K562 (cell line): ENCODE measurements at regions of chr3 and their contacts with region 1.

Region 1: GRCh38 chr3:160399125-160400029 is at the starts of genes IFT80 and SMC4:
- DNase-seq: peak; percentile 92 to 97 (median 94)
- ATAC-seq: peak; percentile 81
- H3K4me3 ChIP-seq: peak within 1 kb of the TSS; percentile 71
- H3K27ac ChIP-seq: peak within 1 kb of the TSS; percentile 99
- H3K4me1 ChIP-seq: peaks cover 8 to 14% of the 10 kb centered on the region in 2 experiments
- H3K27me3 ChIP-seq: no peaks in the 10 kb centered on the region
- CTCF ChIP-seq: no peak; a peak in 1 of 6 replicates
- EP300 ChIP-seq: peak; percentile 66
- POLR2A ChIP-seq: peak; percentile 95
- RAD21 ChIP-seq: no peak
- polyA plus RNA-seq, gene IFT80: 6.7 to 7.2 TPM
- polyA plus RNA-seq, gene SMC4: 87.9 to 105 TPM

Region 2: DNA sequence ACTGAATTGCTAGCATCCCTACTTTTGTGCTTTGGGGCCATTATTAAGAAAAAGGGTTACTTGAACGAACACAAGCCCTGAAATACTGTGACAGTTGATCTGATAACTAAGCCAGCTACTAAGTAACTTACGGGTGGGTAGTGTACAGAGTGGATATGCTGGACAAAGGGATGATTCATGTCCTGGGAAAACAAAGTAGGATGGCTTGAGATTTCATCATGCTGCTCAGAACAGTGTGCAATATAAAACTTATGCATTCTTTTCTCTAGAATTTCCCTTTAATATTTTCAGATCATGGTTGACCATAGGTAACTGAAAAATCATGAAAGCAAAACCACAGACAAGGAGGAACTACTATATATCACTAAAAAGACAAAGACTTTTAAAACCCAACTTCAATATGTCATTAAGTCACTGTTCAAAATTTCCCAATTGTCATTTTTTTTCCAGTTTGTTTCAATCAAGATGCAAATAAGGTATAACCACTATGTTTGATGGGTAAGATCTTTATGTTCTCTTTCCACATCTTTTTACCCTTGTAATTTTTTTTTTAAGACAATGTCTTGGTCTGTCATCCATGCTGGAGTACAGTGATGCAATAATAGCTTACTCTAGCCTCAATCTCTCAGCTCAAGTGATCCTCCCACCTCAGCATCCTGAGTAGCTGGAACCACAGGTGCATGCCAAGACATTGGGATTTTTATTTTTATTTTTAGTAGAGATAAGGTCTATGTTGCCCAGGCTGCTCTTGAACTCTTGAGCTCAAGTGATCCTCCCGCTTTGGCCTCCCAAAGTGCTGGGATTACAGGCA is 68.0 kb before region 1 on chr3:
- CTCF ChIA-PET with region 1: no interaction called
- POLR2A ChIA-PET with region 1: no interaction called
- in situ Hi-C with region 1: no loop called
- intact Hi-C with region 1: loop called (anchors 5 kb)
- DNase-seq: peak in 1 of 4 experiments; percentile 37
- ATAC-seq: peak; percentile 88
- H3K4me3 ChIP-seq: no peak overlapping the region
- H3K27ac ChIP-seq: no peak overlapping the region
- H3K4me1 ChIP-seq: peaks cover 0 to 12% of the 10 kb centered on the region in 2 experiments; a peak in 3 of 5 replicates
- H3K27me3 ChIP-seq: no peaks in the 10 kb centered on the region
- CTCF ChIP-seq: no peak
- EP300 ChIP-seq: peak; percentile 87
- POLR2A ChIP-seq: no peak
- RAD21 ChIP-seq: peak in 1 of 2 experiments; percentile 9; a peak in 1 of 4 replicates